ENCODE measurements at regions of chr3 and their contacts with region 1.

Region 1: DNA sequence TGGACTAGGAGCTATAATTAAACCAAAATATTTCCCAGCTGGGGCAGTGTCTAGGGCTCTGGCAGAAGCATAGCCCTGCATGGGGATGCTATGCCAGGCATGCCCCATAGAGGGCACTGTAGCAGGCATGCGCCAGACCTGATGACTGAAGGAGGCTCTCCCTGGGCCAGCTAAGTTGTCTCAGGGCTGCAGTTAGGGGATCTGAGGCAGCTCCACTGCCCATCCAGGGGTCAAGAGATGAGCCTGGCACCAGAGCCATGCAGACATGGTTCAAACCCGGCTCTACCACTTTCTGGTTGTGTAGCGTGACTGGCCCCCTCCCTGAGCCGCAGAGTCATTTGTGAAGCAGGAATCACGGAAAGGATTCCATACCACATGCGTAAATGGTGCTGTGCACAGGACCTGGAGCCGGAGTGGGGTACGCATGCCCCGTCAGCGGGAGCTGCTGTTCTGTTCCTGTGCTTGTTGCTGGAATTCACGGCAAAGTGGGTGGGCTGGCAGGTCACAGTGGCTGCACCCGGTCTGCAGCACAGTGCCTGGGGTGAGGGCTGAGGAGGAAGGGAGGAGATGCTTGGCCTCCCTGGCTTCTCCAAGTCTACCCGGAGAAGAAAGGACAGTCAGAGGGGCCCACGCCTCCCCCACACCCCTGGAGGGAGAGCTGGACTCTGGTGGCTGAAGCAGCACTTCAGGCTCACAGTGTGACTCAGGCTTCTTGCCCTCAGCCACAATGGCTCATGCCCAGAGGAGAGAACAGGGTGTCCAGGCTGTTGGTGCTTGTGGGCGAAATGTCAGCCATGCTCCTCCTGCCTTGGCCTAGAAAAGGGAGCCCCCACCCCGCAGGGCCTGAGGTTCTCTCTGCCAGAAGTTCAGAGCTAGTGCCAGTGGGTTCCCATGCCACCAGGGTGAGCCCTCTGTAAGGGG is 43.1 kb downstream of the DNASE1L3 start:
- DNase-seq: peak; percentile 55 to 84
- H3K4me3 ChIP-seq: no peak overlapping the region
- H3K27ac ChIP-seq: peak overlapping the region; percentile 31 to 32
- H3K4me1 ChIP-seq: peaks cover 0 to 45% (median 29%) of the 10 kb centered on the region in 4 donors
- H3K27me3 ChIP-seq: no peaks in the 10 kb centered on the region
- CTCF ChIP-seq: peak; percentile 77 to 95

Region 2: DNA sequence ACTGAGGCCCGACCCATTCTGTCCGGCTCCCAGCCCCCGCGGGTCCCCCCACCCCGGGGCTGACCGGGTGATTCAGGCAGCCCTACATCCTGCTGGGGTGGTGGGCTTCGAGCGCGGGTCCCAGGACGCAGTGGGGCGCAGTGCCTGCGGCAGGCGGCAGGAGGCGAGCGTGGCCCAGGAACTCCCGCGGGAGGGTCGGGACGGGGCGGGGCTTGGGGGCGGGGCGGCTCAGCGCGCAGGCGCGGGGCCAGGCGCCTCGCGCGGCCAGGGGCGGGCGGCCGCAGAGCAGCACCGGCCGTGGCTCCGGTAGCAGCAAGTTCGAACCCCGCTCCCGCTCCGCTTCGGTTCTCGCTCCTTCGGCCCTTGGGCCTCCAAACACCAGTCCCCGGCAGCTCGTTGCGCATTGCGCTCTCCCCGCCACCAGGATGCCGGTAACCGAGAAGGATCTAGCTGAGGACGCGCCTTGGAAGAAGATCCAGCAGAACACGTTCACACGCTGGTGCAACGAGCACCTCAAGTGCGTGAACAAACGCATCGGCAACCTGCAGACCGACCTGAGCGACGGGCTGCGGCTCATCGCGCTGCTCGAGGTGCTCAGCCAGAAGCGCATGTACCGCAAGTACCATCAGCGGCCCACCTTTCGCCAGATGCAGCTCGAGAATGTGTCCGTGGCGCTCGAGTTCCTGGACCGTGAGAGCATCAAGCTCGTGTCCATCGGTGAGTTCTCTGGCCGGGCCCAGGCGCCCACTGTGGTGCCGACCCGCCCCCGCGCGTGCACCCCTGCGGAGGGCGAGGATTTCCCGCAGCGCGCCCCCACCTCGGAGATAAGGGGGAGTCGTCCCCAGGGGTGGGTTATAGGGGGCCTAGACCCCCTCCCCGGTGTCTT is 159.3 kb before region 1 on chr3 and contains the start of gene FLNB:
- intact Hi-C with region 1: loop called (anchors 1 kb)
- DNase-seq: peak; percentile 44 to 85
- H3K4me3 ChIP-seq: peak within 1 kb of the TSS; percentile 87
- H3K27ac ChIP-seq: peak within 1 kb of the TSS; percentile 74 to 78
- H3K4me1 ChIP-seq: peaks cover 2 to 43% (median 30%) of the 10 kb centered on the region in 4 donors
- H3K27me3 ChIP-seq: no peaks in the 10 kb centered on the region
- CTCF ChIP-seq: peak; percentile 70 to 79

Measured in tibial artery (tissue), 4 donors.